Endothelial cell of umbilical vein (primary cell): ENCODE measurements at regions of chr12 and their contacts with region 1.

Region 1: DNA sequence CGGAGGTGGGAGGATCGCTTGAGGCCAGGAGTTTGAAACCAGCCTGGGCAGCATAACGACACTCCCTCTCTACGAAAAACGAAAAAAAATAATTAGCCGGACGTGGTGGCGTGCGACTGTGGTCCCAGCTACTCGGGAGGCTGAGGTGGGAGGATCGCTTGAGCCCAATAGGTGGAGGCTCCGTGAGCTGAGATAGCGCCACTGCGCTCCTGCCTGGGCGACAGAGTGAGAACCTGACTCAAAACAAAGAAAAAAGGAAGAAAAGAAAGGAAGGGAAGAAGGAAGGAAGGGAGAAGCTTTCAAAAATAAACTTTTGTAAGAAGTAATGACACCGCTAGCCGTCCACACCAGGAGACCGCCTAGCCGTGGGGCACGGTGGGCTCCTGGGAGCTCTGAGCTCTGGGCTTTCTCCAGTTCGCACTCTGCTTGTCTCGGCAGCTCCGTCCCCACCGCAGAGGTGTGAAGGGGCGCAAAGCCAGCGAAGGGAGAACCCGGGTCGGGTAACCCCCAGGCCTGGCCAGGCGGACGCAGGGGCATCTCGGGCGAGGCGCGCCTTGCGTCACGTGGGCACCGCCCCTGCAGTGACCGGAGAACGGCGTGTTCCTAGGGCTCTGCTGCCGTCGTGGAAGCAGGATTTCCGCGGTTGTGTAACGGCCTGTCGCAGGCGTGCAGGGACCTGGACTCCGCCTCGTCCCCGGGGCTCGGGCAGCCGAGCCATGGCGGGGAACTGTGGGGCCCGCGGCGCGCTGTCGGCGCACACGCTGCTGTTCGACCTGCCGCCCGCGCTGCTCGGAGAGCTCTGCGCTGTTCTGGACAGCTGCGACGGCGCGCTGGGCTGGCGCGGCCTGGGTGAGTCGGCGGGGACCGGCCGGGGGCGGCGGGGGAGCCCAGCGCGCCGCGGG is at the start of gene IRAK3:
- DNase-seq: peak; percentile 70
- H3K4me3 ChIP-seq: peak within 1 kb of the TSS; percentile 44 to 82 (median 69)
- H3K27ac ChIP-seq: peak within 1 kb of the TSS; percentile 41
- H3K4me1 ChIP-seq: peaks cover 20% of the 10 kb centered on the region
- H3K27me3 ChIP-seq: peaks cover 0 to 3% of the 10 kb centered on the region in 2 experiments
- CTCF ChIP-seq: no peak
- POLR2A ChIP-seq: peak; percentile 77
- total RNA-seq, gene IRAK3: 7.4 and 8.5 TPM in 2 replicates

Region 2: GRCh38 chr12:66176105-66176900 is 12.5 kb before region 1 on chr12:
- CTCF ChIA-PET with region 1: interaction called, 12 read pairs
- POLR2A ChIA-PET with region 1: no interaction called
- dilution Hi-C with region 1: no loop called
- intact Hi-C with region 1: no loop called
- DNase-seq: peak; percentile 75
- H3K4me3 ChIP-seq: no peak overlapping the region
- H3K27ac ChIP-seq: no peak overlapping the region
- H3K4me1 ChIP-seq: peaks cover 12% of the 10 kb centered on the region
- H3K27me3 ChIP-seq: no peaks in the 10 kb centered on the region
- CTCF ChIP-seq: no peak
- POLR2A ChIP-seq: no peak